Endothelial cell of umbilical vein (primary cell): ENCODE measurements at regions of chr13 and their contacts with region 1.

Region 1: GRCh38 chr13:40589285-40590109 is 76.9 kb downstream of the FOXO1 start:
- DNase-seq: peak; percentile 94
- H3K4me3 ChIP-seq: peak overlapping the region in 1 of 3 experiments; percentile 14
- H3K27ac ChIP-seq: peak overlapping the region; percentile 87
- H3K4me1 ChIP-seq: peaks cover 69% of the 10 kb centered on the region
- H3K27me3 ChIP-seq: no peaks in the 10 kb centered on the region
- CTCF ChIP-seq: no peak
- POLR2A ChIP-seq: peak; percentile 57

Region 2: DNA sequence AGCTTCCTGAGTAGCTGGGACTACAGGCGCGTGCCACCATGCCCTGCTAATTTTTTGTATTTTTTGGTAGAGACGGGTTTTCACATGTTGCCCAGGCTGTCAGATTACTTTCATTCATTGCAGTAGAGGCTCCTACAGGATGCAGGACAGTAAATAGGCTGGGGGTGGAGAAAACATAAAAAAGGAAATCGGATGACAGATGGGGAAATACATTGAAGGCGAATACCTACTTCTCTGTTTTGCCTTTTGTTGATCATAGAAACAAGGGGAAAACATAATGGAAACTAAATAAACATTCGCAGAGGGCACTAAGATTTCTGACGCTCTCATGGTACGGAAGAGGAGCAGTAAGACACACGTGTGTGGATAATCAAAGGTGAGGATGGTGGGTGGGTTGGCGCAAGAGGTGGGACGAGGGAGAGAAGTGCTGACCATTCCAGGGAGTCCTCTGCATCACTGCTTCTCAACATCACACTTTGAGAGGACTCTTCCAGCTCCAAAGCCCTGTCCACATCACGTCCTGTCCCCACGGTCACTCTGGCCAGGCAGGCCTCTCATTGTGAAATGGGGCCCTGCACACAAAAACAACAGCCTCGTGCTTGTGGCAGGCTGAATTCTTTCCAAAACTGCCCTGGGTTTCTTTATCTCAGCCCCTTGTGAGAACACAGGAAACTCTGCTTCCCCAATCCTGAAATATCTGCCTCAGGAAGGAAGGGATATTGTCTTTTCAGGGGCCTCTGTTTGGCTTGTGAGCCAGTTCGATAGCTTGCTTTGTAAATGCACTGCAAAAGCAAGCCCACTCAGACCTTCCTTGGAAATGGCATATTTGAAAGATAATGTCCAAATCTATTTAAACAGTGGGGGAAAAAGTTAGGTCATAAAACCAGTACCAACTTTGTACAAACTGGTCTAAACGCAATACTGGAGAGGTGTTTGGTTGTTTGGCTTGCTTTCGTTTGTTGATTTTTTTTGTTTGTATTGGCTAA is 111.6 kb before region 1 on chr13:
- CTCF ChIA-PET with region 1: no interaction called
- POLR2A ChIA-PET with region 1: no interaction called
- dilution Hi-C with region 1: no loop called
- intact Hi-C with region 1: loop called (anchors 1 kb)
- DNase-seq: peak; percentile 94
- H3K4me3 ChIP-seq: peak overlapping the region in 1 of 3 experiments; percentile 10
- H3K27ac ChIP-seq: peak overlapping the region; percentile 92
- H3K4me1 ChIP-seq: peaks cover 32% of the 10 kb centered on the region
- H3K27me3 ChIP-seq: no peaks in the 10 kb centered on the region
- CTCF ChIP-seq: no peak
- POLR2A ChIP-seq: peak; percentile 36

Region 3: DNA sequence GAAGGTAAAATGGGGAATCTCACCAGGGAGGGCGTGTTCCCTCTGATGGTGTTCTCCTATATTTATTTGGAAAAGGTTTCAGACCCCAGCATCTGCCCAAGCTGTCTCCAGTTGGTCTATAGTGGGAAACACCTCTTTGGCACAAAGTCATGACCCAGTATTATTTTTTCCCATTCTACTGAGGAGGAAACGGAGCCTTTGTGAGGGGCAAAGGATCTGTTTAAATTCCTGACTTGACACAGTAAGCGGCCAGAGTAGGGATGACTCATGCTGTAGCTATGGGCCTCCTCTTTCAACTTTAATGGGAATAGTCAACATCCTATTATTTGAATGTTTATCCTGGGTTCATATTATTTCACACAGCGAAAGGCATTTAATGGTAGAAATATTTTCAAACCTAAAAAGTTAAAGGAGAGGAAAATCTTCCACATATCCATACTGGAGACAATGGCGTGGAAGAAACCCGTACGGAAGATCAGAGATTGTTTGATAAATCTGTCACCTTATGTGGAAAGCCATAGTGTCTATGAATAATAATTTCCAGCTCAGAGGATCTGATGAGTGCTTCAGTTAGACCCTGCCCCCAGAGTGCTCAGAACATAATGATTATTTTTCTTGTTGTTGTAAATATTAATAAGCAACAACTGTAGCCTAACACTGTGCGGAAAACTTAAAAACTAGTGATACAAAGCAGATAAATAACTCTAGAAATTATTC is 49.0 kb before region 1 on chr13:
- CTCF ChIA-PET with region 1: no interaction called
- POLR2A ChIA-PET with region 1: no interaction called
- dilution Hi-C with region 1: no loop called
- intact Hi-C with region 1: loop called (anchors 1 kb)
- DNase-seq: peak; percentile 96
- H3K4me3 ChIP-seq: no peak overlapping the region
- H3K27ac ChIP-seq: peak overlapping the region; percentile 80
- H3K4me1 ChIP-seq: peaks cover 18% of the 10 kb centered on the region
- H3K27me3 ChIP-seq: no peaks in the 10 kb centered on the region
- CTCF ChIP-seq: no peak
- POLR2A ChIP-seq: no peak

Region 4: GRCh38 chr13:40564342-40565001 is 25.0 kb before region 1 on chr13:
- CTCF ChIA-PET with region 1: interaction called, 3 read pairs
- POLR2A ChIA-PET with region 1: interaction called, 5 read pairs
- dilution Hi-C with region 1: no loop called
- intact Hi-C with region 1: loop called (anchors 2 kb)
- DNase-seq: peak; percentile 91
- H3K4me3 ChIP-seq: peak overlapping the region in 1 of 3 experiments; percentile 3
- H3K27ac ChIP-seq: peak overlapping the region; percentile 46
- H3K4me1 ChIP-seq: peaks cover 57% of the 10 kb centered on the region
- H3K27me3 ChIP-seq: no peaks in the 10 kb centered on the region
- CTCF ChIP-seq: peak; percentile 29 to 54
- POLR2A ChIP-seq: no peak

Region 5: DNA sequence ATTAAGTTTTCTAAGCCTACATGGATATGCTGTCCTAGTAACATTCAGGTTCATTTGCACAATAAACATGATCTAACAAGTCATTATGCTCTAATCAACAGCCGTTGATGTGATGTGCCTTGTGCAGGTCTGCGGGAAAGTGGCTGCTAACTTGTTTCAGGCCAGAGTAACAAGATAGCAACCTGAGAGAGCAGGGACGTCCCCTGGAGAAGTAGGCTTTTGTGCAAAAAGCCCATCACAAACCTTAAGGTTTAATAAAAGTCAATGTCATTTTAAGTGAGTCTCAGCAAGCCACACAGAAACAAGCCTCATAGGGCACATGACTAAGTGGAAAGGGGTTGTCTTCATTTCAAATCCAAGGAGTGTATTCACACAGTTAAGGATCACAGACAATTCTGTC is 59.3 kb after region 1 on chr13:
- CTCF ChIA-PET with region 1: no interaction called
- POLR2A ChIA-PET with region 1: interaction called, 8 read pairs
- dilution Hi-C with region 1: no loop called
- intact Hi-C with region 1: loop called (anchors 1 kb)
- DNase-seq: peak; percentile 44
- H3K4me3 ChIP-seq: no peak overlapping the region
- H3K27ac ChIP-seq: peak overlapping the region; percentile 7
- H3K4me1 ChIP-seq: peaks cover 36% of the 10 kb centered on the region
- H3K27me3 ChIP-seq: no peaks in the 10 kb centered on the region
- CTCF ChIP-seq: no peak
- POLR2A ChIP-seq: no peak